ENCODE measurements at regions of chr3 and their contacts with region 1.

Region 1: GRCh38 chr3:3200632-3201212 is 21.2 kb upstream of the CRBN start:
- DNase-seq: peak; percentile 81
- H3K4me3 Mint-ChIP-seq: no peak overlapping the region
- H3K27ac Mint-ChIP-seq: no peak overlapping the region
- H3K4me1 Mint-ChIP-seq: no peaks in the 10 kb centered on the region
- H3K27me3 Mint-ChIP-seq: peaks cover 13% of the 10 kb centered on the region
- CTCF ChIP-seq: peak; percentile 80

Region 2: DNA sequence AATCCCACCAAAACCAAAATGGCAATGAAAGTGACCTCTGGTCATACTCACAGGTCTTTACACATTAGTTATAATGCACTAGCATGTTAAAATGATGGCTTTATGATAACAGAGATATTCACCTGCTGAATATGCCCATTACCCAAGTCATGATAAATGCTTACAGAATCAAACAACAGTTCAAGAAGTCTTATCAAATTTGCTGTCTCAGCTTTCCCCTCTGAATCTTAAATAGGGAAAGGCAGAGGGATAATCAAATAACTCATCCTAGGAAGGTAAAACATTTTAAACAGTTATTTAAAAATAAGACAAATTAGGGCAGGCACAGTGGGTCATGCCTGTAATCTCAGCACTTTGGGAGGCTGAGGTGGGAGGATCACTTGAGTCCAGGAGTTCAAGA is 31.5 kb after region 1 on chr3:
- CTCF ChIA-PET with region 1: no interaction called
- POLR2A ChIA-PET with region 1: no interaction called
- intact Hi-C with region 1: no loop called
- DNase-seq: no peak
- H3K4me3 Mint-ChIP-seq: no peak overlapping the region
- H3K27ac Mint-ChIP-seq: no peak overlapping the region
- H3K4me1 Mint-ChIP-seq: no peaks in the 10 kb centered on the region
- H3K27me3 Mint-ChIP-seq: no peaks in the 10 kb centered on the region
- CTCF ChIP-seq: no peak

Region 3: DNA sequence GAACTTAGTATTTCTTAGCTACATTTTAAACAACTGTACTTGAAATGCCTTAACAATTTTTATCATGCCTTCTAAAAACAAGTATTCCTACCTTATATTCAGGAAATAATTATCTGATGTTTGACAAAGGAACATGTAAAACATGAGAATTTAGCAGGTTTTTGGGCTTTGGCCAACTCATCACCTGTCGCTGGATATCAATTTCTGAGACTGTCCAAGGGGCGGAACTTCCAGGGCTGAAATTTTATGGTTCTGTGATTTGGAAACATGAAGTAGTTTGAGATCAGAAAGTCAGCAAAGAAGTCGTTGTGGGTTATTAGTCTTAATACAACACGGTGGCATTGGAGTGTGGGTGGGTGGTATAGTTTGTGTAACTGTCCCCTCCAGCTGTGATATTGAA is 316.3 kb after region 1 on chr3:
- CTCF ChIA-PET with region 1: no interaction called
- POLR2A ChIA-PET with region 1: no interaction called
- intact Hi-C with region 1: no loop called
- DNase-seq: no peak
- H3K4me3 Mint-ChIP-seq: no peak overlapping the region
- H3K27ac Mint-ChIP-seq: no peak overlapping the region
- H3K4me1 Mint-ChIP-seq: no peaks in the 10 kb centered on the region
- H3K27me3 Mint-ChIP-seq: no peaks in the 10 kb centered on the region
- CTCF ChIP-seq: no peak

Region 4: GRCh38 chr3:3992312-3992874 is 791.7 kb after region 1 on chr3:
- CTCF ChIA-PET with region 1: interaction called, 176 read pairs
- POLR2A ChIA-PET with region 1: interaction called, 8 read pairs
- intact Hi-C with region 1: no loop called
- DNase-seq: no peak
- H3K4me3 Mint-ChIP-seq: no peak overlapping the region
- H3K27ac Mint-ChIP-seq: no peak overlapping the region
- H3K4me1 Mint-ChIP-seq: no peaks in the 10 kb centered on the region
- H3K27me3 Mint-ChIP-seq: no peaks in the 10 kb centered on the region
- CTCF ChIP-seq: no peak

Region 5: DNA sequence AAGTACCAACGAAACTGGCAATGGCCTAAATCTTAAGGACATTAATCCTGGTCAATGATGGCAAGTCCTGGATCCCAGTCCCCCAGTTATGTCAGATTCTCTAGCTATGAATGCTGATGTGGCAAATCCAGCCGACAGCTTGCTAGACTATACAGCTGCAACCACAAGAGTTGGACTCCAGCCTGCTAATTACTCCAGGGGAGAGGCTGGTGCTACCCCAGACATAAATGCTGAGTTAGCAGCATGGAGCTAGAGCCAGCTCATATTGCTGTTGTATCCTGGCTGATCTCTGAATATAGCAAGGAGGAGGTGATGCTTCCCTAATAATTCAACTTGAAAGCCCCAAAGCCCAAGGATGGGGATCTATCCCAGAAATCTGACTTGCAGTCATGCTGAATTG is 805.6 kb after region 1 on chr3:
- CTCF ChIA-PET with region 1: interaction called, 176 read pairs
- POLR2A ChIA-PET with region 1: no interaction called
- intact Hi-C with region 1: no loop called
- DNase-seq: no peak
- H3K4me3 Mint-ChIP-seq: no peak overlapping the region
- H3K27ac Mint-ChIP-seq: no peak overlapping the region
- H3K4me1 Mint-ChIP-seq: no peaks in the 10 kb centered on the region
- H3K27me3 Mint-ChIP-seq: no peaks in the 10 kb centered on the region
- CTCF ChIP-seq: no peak

Region 6: DNA sequence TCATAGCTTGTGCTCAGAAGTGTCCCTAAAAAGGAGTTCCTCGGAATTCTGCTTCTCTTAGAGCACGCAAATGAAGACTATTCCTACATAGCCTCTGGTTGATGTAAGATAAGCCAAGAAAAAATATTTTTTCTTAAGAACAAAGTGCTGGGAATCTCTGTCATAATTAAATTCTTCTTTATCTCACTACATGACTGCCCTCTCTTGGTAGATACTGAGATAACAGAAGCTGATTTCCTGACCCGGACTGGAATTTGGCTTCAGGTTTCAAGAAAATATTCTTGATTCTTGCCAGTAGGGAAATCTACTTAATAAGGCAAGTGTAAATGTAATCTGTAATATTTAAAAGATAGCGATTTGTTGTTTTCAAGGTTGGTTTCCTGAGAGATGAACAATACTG is 1071.1 kb after region 1 on chr3:
- CTCF ChIA-PET with region 1: interaction called, 72 read pairs
- POLR2A ChIA-PET with region 1: interaction called, 6 read pairs
- intact Hi-C with region 1: loop called (anchors 1 kb)
- DNase-seq: peak; percentile 42
- H3K4me3 Mint-ChIP-seq: no peak overlapping the region
- H3K27ac Mint-ChIP-seq: no peak overlapping the region
- H3K4me1 Mint-ChIP-seq: no peaks in the 10 kb centered on the region
- H3K27me3 Mint-ChIP-seq: peaks cover 1% of the 10 kb centered on the region
- CTCF ChIP-seq: peak; percentile 53

Region 7: GRCh38 chr3:4284865-4285264 is 1084.1 kb after region 1 on chr3:
- CTCF ChIA-PET with region 1: interaction called, 73 read pairs
- POLR2A ChIA-PET with region 1: no interaction called
- intact Hi-C with region 1: loop called (anchors 1 kb)
- DNase-seq: no peak
- H3K4me3 Mint-ChIP-seq: no peak overlapping the region
- H3K27ac Mint-ChIP-seq: no peak overlapping the region
- H3K4me1 Mint-ChIP-seq: no peaks in the 10 kb centered on the region
- H3K27me3 Mint-ChIP-seq: peaks cover 29% of the 10 kb centered on the region
- CTCF ChIP-seq: no peak

Region 8: DNA sequence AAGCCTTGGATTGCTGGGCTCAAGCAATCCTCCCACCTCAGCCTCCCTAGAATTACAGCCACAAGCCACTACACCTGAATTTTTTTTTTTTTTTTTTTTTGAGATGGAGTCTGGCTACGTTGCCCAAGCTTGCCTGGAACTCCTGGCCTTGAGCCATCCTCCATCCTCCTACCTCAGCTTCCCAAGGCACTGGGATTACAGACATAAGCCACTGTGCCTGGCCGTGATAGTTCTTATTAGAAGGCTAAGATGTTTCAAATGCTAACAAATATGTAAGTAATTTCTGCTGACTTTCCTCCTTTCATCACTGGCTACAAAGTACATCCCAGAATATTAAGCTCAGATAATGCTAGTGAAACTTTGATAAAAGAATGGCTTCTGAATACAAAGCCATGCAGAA is 1096.8 kb after region 1 on chr3:
- CTCF ChIA-PET with region 1: interaction called, 55 read pairs
- POLR2A ChIA-PET with region 1: no interaction called
- intact Hi-C with region 1: no loop called
- DNase-seq: no peak
- H3K4me3 Mint-ChIP-seq: no peak overlapping the region
- H3K27ac Mint-ChIP-seq: no peak overlapping the region
- H3K4me1 Mint-ChIP-seq: no peaks in the 10 kb centered on the region
- H3K27me3 Mint-ChIP-seq: no peaks in the 10 kb centered on the region
- CTCF ChIP-seq: no peak

Measured in MCF 10A (cell line).